OCI-LY7 (cell line): ENCODE measurements at regions of chr22 and their contacts with region 1.

Region 1: GRCh38 chr22:18065256-18065655 is 12.5 kb upstream of the PEX26 start:
- DNase-seq: peak; percentile 74
- H3K4me3 ChIP-seq: peak overlapping the region; percentile 58
- H3K27ac ChIP-seq: peak overlapping the region; percentile 99
- H3K4me1 ChIP-seq: peaks cover 77% of the 10 kb centered on the region
- CTCF ChIP-seq: peak; percentile 60; the same call in 1 of the 2 replicates

Region 2: DNA sequence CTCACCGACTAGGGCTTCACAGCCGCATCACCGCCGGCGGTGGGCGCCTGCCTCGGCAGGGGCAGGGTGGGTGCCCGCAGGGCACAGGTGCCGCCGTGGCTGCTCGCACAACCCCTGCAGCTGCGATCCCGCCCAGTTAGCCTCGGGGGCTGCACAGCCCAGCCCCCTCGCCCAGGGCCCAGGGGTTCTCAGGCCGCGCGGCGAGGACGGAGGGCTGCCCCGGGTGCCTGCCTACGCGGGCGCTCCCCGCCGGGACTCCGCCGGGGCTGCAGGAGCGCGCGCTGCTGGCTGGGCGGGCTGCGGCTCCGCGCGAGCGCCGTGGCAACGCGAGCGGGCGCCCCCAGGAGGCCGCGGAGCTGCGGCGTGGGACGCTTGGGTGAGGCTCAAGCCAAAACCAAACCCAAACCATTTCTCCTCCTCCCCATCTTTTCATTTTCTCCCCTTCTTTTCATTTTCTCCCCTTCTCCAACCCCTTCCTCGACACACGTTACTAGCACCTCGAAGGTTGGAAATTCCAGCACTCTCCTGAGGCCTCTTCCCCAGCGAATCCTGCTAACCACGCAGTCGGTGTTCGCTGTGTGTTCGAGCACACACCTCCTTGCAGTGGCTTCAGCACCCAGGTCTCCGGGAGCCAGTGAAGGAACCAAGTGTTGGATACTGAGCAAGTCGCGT is 40.8 kb before region 1 on chr22 and contains the start of gene MICAL3:
- CTCF ChIA-PET with region 1: interaction called, 3 read pairs
- POLR2A ChIA-PET with region 1: interaction called, 8 read pairs
- intact Hi-C with region 1: loop called (anchors 2 kb)
- DNase-seq: peak; percentile 88
- H3K4me3 ChIP-seq: peak within 1 kb of the TSS; percentile 68
- H3K27ac ChIP-seq: peak within 1 kb of the TSS; percentile 57
- H3K4me1 ChIP-seq: peaks cover 60% of the 10 kb centered on the region
- CTCF ChIP-seq: peak; percentile 76
- total RNA-seq, gene MICAL3: 80.9 and 93.2 TPM in 2 replicates